ENCODE measurements at regions of chr10 and their contacts with region 1.

Region 1: GRCh38 chr10:73601486-73601921 is 10.4 kb upstream of the USP54 start:
- DNase-seq: no peak
- ATAC-seq: peak; percentile 81 to 96 (median 86)
- H3K4me3 ChIP-seq: peak overlapping the region; percentile 46
- H3K27ac ChIP-seq: peak overlapping the region; percentile 79
- H3K4me1 ChIP-seq: peaks cover 13% of the 10 kb centered on the region
- H3K27me3 ChIP-seq: no peaks in the 10 kb centered on the region
- CTCF ChIP-seq: no peak

Region 2: DNA sequence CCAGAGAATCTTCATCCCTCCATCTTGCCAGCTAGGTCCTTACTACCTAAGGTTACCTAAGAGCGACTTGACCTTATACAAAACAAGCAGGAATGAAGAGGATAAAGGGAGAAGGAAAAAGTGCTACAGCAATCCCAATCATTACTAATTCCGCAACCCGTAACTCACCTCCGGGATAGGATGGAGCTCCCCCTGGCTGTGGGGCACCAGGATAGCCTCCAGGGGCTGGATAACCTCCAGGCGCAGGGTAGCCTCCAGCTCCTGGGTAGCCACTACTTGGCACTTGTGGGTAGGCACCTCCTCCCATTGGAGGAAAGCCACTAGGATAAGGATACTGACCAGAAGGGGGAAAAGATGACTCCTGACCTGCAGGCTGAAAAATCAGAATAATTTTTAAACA is 203.5 kb before region 1 on chr10:
- intact Hi-C with region 1: no loop called
- DNase-seq: no peak
- ATAC-seq: peak in 3 of 4 donors; percentile 64 to 75 (median 68)
- H3K4me3 ChIP-seq: no peak overlapping the region
- H3K27ac ChIP-seq: no peak overlapping the region
- H3K4me1 ChIP-seq: peaks cover 14% of the 10 kb centered on the region
- H3K27me3 ChIP-seq: no peaks in the 10 kb centered on the region
- CTCF ChIP-seq: peak; percentile 7

Region 3: DNA sequence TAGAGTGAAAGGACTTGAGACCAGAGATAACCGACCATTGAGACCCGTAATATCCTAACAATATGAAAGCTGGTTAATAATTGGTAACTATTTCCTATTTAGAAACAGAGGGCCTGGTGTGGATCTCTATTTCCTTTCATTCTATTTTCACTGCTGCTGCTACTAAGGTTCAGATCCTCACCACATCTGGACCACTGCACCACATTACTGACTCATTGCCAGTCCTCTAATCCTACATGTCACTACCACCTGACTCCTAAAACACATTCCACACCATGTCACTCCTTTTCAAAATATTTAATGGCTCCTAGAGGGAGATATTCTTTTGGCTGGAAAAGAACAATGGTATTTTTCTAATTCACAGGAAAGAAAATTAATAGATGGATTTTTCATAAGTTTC is 16.8 kb before region 1 on chr10:
- intact Hi-C with region 1: loop called in 1 of 2 experiments (anchors 2 kb)
- DNase-seq: no peak
- ATAC-seq: peak; percentile 49 to 83 (median 60)
- H3K4me3 ChIP-seq: no peak overlapping the region
- H3K27ac ChIP-seq: peak overlapping the region; percentile 56
- H3K4me1 ChIP-seq: peaks cover 29% of the 10 kb centered on the region
- H3K27me3 ChIP-seq: no peaks in the 10 kb centered on the region
- CTCF ChIP-seq: no peak